Activated CD4-positive, alpha-beta T cell treated with anti-CD3 and anti-CD28 coated beads for 36 hours (primary cell): ENCODE measurements at regions of chr11 and their contacts with region 1.

Region 1: DNA sequence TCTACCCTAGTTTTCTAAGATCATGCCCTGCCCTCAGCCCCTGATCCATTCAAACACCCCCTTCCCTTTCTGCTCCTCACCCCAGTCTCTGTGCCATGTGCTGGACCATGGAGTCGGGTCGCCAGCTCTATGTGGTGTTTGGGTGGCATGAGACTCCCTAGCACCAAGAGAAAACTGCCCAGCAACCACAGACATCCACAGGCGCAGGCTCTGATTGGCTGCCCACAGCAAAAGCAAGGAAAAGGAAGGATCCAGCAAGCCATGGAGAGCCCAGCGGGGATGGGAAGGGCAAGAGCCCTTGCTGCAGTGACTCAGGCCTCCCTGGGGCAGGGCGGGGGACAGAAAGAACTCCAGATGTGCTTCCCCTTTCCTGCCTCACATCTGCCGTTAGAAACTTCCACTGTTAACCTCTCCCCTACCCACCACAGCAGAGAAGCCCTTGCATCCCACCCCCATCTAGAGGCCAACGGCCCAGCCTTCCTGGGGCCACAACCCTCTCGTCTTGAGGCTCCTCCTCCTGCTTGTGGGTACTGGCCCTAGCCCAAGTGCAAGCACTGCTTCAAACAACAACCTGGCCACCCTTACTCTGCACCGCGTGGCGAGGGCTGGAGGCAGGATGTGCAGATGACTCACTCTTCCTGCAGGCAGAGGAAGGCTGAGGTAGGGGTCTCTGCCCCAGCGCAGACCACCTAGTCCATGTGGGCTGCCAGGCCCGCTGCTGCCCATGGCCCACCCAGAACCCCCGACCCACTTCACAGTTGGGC is 9.7 kb upstream of the AHNAK start:
- DNase-seq: peak; percentile 92
- ATAC-seq: peak; percentile 65
- H3K4me3 Mint-ChIP-seq: peak overlapping the region; percentile 54
- H3K27ac Mint-ChIP-seq: peak overlapping the region; percentile 92
- H3K4me1 Mint-ChIP-seq: peaks cover 98% of the 10 kb centered on the region
- H3K27me3 Mint-ChIP-seq: no peaks in the 10 kb centered on the region

Region 2: DNA sequence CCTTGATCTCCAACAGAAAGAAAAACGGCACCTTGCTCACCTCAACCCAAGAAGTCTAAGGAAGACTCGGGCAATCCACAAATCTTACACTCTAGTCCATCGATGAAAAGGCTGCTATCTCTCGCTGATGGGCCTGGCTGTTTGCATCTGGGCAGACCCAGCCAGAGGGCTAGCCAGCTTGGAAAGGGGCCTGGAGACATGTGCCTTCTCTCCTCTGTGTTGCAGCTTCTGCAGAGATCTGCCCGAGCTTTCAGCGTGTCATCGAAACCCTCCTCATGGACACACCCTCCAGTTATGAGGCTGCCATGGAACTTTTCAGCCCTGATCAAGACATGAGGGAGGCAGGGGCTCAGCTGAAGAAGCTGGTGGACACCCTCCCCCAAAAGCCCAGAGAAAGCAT is 134.3 kb before region 1 on chr11:
- CTCF ChIA-PET with region 1: interaction called, 56 read pairs
- POLR2A ChIA-PET with region 1: interaction called, 7 read pairs
- intact Hi-C with region 1: loop called (anchors 1 to 5 kb)
- DNase-seq: no peak
- ATAC-seq: no peak
- H3K4me3 Mint-ChIP-seq: no peak overlapping the region
- H3K27ac Mint-ChIP-seq: no peak overlapping the region
- H3K4me1 Mint-ChIP-seq: peaks cover 8% of the 10 kb centered on the region
- H3K27me3 Mint-ChIP-seq: no peaks in the 10 kb centered on the region

Region 3: GRCh38 chr11:62497132-62497915 is 59.0 kb before region 1 on chr11:
- CTCF ChIA-PET with region 1: interaction called, 4 read pairs
- POLR2A ChIA-PET with region 1: no interaction called
- intact Hi-C with region 1: loop called (anchors 1 kb)
- DNase-seq: peak; percentile 53
- ATAC-seq: peak; percentile 81
- H3K4me3 Mint-ChIP-seq: no peak overlapping the region
- H3K27ac Mint-ChIP-seq: no peak overlapping the region
- H3K4me1 Mint-ChIP-seq: peaks cover 3% of the 10 kb centered on the region
- H3K27me3 Mint-ChIP-seq: peaks cover 4% of the 10 kb centered on the region

Region 4: DNA sequence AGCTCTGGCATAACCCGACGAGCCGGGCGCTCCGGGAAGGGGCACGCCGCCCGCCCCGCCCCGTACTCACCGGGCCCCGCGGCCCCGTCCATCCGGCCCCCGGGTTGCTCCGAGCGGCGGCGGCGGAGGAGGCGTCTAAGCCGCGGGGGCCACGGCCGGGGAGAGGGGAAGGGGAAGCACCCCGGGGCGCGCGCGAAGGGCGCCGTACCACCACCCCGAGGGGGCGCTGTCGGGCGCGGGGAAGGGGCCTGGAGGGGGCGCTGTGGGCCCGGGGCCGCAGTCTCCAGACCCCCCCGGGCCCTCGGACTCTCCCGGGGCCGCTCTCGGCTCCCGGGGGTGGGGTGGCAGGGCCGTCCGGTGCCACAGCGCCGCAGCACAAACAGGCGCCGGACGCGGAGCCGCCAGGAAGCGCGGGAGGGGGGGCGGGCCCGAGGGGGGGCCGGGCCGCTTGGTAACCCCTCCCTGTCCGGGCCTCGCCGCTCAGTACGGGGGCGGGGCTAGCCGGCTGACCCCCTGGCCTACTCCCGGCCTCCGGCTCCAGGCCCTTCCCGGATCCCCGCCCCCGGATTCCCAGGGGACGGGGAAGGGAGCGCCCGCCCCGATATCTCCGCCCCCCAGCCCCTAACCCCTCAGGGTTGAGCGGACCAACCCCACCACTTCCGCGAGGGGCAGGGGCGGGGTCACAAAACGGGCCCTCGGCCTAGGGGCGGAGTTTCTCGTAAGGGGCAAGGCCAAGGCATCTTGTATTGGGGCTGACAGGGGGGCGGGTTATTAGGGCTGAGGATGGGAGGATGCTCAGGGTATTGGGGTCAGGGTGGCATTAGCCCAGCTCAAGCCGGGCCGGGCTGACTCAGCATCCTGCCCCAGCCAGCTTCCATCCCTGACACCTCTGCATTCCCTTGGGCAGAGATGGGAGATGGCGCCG is 56.3 kb after region 1 on chr11 and contains the starts of genes EML3 and ROM1:
- CTCF ChIA-PET with region 1: interaction called, 4 read pairs
- POLR2A ChIA-PET with region 1: no interaction called
- intact Hi-C with region 1: loop called in 1 of 2 experiments (anchors 5 kb)
- DNase-seq: peak; percentile 91
- ATAC-seq: peak; percentile 78
- H3K4me3 Mint-ChIP-seq: peak within 1 kb of the TSS; percentile 91
- H3K27ac Mint-ChIP-seq: peak within 1 kb of the TSS; percentile 90
- H3K4me1 Mint-ChIP-seq: peaks cover 37% of the 10 kb centered on the region
- H3K27me3 Mint-ChIP-seq: no peaks in the 10 kb centered on the region
- total RNA-seq, gene EML3: 101 to 112 TPM
- total RNA-seq, gene ROM1: 1.5 to 1.9 TPM